Esophagus muscularis mucosa (tissue), 4 donors: ENCODE measurements at regions of chr9 and their contacts with region 1.

Region 1: DNA sequence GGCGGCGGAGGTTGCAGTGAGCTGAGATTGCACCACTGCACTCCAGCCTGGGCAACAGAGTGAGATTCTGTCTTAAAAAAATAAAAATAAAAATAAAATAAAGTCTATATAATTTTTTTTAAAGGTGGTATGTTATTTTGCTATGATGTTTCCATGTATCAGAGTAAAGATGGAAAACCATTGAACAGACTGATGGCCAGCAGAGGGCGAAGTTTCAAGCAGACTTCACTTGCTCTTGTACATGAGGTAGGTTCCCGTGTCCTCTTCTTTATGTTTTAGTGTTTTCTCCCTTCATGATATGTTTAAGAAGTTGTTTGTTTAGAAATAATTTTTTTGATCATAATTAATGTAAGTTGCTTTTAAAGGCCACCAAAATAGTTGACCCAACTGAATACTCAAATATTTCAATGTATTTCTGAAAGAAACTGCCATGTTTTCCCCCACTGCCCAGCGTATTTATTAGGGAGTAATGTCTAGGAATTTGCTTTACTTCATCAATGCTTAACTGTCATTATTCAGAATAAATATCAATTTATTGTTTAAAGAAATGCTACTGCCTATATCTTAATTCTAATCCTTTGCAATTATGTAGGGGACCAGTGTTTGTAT is 146.4 kb downstream of the HACD4 start:
- DNase-seq: no peak
- H3K4me3 ChIP-seq: no peak overlapping the region
- H3K27ac ChIP-seq: no peak overlapping the region
- H3K4me1 ChIP-seq: no peaks in the 10 kb centered on the region
- H3K27me3 ChIP-seq: no peaks in the 10 kb centered on the region
- CTCF ChIP-seq: peak; percentile 53 to 75 (median 72)
- EP300 ChIP-seq: no peak
- POLR2A ChIP-seq: no peak

Region 2: GRCh38 chr9:21104787-21105186 is 219.7 kb after region 1 on chr9:
- intact Hi-C with region 1: loop called (anchors 5 kb)
- DNase-seq: peak; percentile 29
- H3K4me3 ChIP-seq: no peak overlapping the region
- H3K27ac ChIP-seq: no peak overlapping the region
- H3K4me1 ChIP-seq: no peaks in the 10 kb centered on the region
- H3K27me3 ChIP-seq: no peaks in the 10 kb centered on the region
- CTCF ChIP-seq: no peak
- EP300 ChIP-seq: no peak
- POLR2A ChIP-seq: no peak